Sigmoid colon (tissue), 7 donors: ENCODE measurements at regions of chr4 and their contacts with region 1.

Region 1: GRCh38 chr4:7719354-7720174 is 220.1 kb downstream of the AFAP1 start:
- DNase-seq: no peak
- H3K4me3 ChIP-seq: no peak overlapping the region
- H3K27ac ChIP-seq: no peak overlapping the region
- H3K4me1 ChIP-seq: peaks cover 0 to 7% (median 5%) of the 10 kb centered on the region in 4 donors
- H3K27me3 ChIP-seq: no peaks in the 10 kb centered on the region
- CTCF ChIP-seq: peak; percentile 55 to 85 (median 69)
- EP300 ChIP-seq: no peak
- POLR2A ChIP-seq: no peak

Region 2: GRCh38 chr4:6974138-6974848 is 745.3 kb before region 1 on chr4:
- intact Hi-C with region 1: loop called (anchors 10 kb)
- DNase-seq: peak; percentile 89
- H3K4me3 ChIP-seq: no peak overlapping the region
- H3K27ac ChIP-seq: no peak overlapping the region
- H3K4me1 ChIP-seq: peaks cover 0 to 10% (median 8%) of the 10 kb centered on the region in 4 donors
- H3K27me3 ChIP-seq: no peaks in the 10 kb centered on the region
- CTCF ChIP-seq: peak; percentile 89 to 99 (median 96)
- EP300 ChIP-seq: no peak
- POLR2A ChIP-seq: no peak